A673 (cell line): ENCODE measurements at regions of chr14 and their contacts with region 1.

Region 1: GRCh38 chr14:93655078-93655750 is 133.1 kb downstream of the PRIMA1 start:
- DNase-seq: peak; percentile 78
- H3K4me3 ChIP-seq: no peak overlapping the region
- H3K27ac ChIP-seq: no peak overlapping the region
- H3K4me1 ChIP-seq: no peaks in the 10 kb centered on the region
- H3K27me3 ChIP-seq: peaks cover 14% of the 10 kb centered on the region
- CTCF ChIP-seq: peak; percentile 65

Region 2: GRCh38 chr14:93892923-93893558 is 237.8 kb after region 1 on chr14:
- CTCF ChIA-PET with region 1: no interaction called
- POLR2A ChIA-PET with region 1: no interaction called
- intact Hi-C with region 1: loop called (anchors 2 kb)
- DNase-seq: peak; percentile 70
- H3K4me3 ChIP-seq: no peak overlapping the region
- H3K27ac ChIP-seq: no peak overlapping the region
- H3K4me1 ChIP-seq: no peaks in the 10 kb centered on the region
- H3K27me3 ChIP-seq: peaks cover 28% of the 10 kb centered on the region
- CTCF ChIP-seq: peak; percentile 97

Region 3: DNA sequence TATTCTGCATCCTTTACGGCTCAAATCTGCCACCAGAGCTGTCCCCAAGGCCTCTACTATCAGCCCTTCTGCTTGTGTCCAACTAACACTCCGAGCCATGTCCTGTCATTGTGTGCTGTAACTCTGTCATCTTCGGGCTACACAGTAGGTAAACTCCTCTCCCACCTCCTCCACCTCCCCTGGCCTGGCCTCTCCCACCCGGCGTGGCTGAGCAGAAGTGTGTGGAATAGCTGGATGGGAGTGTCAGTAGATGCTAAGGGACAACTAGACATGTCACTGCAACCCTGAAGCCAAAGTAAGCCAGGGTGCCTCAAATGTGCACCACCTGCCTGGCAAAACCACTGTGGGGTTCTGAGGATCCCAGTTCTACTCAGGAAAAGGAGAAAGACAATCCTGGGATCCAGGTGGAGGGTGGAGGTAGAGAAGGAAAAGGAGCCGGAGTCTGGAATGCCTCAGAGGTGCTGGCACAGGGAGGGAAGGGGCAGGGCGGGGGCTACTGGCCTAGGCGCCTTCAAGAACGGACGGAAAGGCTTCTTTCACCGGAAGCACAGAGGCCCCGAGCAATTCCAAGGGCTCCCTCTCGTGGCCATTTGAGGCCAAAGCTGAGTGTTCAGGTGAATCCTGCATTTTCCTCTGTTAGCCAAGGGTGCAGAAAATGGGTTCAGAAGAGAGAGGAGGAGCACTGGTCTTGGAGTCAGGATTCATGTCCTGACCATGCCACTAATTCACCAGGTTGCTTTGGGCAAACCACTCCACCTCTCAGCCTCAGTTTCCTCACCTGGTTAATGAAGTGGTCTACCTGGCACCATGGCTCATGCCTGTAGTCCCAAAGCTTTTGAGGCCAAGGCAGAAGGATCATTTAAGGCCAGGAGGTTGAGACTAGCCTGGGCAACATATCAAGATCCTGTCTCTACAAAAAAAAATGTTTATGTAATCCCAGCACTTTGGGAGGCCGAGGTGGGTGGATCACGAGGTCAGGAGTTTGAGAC is 251.4 kb after region 1 on chr14:
- CTCF ChIA-PET with region 1: interaction called, 11 read pairs
- POLR2A ChIA-PET with region 1: no interaction called
- intact Hi-C with region 1: loop called (anchors 2 kb)
- DNase-seq: peak; percentile 71
- H3K4me3 ChIP-seq: no peak overlapping the region
- H3K27ac ChIP-seq: no peak overlapping the region
- H3K4me1 ChIP-seq: no peaks in the 10 kb centered on the region
- H3K27me3 ChIP-seq: peaks cover 15% of the 10 kb centered on the region
- CTCF ChIP-seq: peak; percentile 87

Region 4: DNA sequence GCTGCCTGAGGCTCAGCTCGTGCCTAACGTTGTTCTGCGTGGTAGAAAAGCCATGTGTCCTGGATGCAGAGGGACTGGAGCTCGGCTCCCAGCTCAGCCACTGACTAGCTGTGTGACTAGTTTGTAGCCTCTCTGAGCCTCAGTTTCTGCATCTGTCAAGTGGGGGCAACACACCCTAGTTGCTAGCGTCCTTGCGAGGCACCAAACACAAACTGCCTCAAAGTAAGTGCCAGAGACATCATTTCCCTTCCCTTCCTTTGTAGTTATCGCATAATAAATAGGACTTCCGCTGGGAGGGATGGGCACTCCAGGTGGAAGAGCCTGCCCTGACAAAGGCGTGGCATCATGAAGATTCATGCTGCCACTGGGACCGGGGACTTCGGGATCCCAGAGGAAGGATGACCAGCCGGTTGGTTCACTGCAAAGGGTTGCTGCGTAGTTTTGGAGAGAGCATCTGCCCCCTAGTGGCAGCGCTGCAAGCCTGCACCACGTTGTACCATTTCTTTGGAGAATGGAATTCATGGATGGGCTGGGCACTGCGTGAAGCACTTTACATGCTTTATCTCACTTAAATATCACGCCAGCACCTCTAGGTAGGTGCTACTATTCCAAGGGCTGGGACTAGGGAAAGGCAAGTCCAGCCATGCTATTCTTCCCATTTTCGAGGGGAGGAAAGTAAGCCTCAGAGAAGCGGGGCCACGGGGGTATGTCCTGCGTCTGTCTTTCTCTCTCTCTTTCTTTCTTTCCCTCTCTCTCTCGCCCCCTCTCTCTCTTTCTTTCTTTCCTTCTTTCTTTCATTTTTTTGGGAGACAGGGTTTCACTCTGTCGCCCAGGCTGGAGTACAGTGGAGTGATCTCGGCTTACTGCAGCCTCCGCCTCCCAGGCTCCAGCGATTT is 346.5 kb after region 1 on chr14:
- CTCF ChIA-PET with region 1: no interaction called
- POLR2A ChIA-PET with region 1: no interaction called
- intact Hi-C with region 1: loop called (anchors 10 kb)
- DNase-seq: peak; percentile 69
- H3K4me3 ChIP-seq: no peak overlapping the region
- H3K27ac ChIP-seq: no peak overlapping the region
- H3K4me1 ChIP-seq: peaks cover 4% of the 10 kb centered on the region
- H3K27me3 ChIP-seq: no peaks in the 10 kb centered on the region
- CTCF ChIP-seq: peak; percentile 97